ENCODE measurements at regions of chr19 and their contacts with region 1.

Region 1: DNA sequence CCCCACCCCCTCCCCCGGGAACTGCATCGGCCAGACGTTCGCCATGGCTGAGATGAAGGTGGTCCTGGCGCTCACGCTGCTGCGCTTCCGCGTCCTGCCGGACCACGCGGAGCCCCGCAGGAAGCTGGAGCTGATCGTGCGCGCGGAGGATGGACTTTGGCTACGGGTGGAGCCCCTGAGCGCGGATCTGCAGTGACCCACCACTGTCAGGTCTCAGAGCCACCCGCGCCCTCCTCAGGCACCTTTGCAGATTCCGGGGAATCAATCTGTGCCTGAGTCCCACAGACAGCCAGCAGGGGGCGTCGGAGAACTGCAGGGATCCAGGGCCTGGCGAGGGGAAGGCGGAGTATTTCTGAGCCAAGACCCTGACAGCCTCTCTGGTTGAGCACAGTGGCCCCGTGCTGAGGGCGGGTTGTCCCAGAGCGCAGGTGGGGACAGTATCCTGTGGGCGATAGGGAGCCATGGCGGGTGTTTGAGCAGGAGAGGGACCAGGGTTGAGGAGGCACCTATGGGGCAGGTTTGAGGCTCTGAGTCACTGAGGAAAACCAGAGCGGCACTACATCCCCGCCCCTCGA is 30.4 kb upstream of the CYP4F8 start:
- DNase-seq: peak; percentile 78 to 87
- ATAC-seq: peak; percentile 89 to 98 (median 89)
- H3K4me3 ChIP-seq: no peak overlapping the region
- H3K4me3 Mint-ChIP-seq: no peak overlapping the region
- H3K27ac ChIP-seq: no peak overlapping the region
- H3K27ac Mint-ChIP-seq: no peak overlapping the region
- H3K4me1 ChIP-seq: peaks cover 7% of the 10 kb centered on the region
- H3K4me1 Mint-ChIP-seq: peaks cover 6% of the 10 kb centered on the region in 2 donors
- H3K27me3 ChIP-seq: peaks cover 7% of the 10 kb centered on the region
- H3K27me3 Mint-ChIP-seq: peaks cover 15 to 26% of the 10 kb centered on the region in 2 donors
- CTCF ChIP-seq: peak; percentile 73

Region 2: GRCh38 chr19:15869109-15869555 is 284.5 kb after region 1 on chr19:
- intact Hi-C with region 1: loop called (anchors 1 kb)
- DNase-seq: peak in 1 of 2 donors; percentile 77
- ATAC-seq: peak; percentile 59 to 96 (median 66)
- H3K4me3 ChIP-seq: no peak overlapping the region
- H3K4me3 Mint-ChIP-seq: no peak overlapping the region
- H3K27ac ChIP-seq: no peak overlapping the region
- H3K27ac Mint-ChIP-seq: no peak overlapping the region
- H3K4me1 ChIP-seq: peaks cover 9% of the 10 kb centered on the region
- H3K4me1 Mint-ChIP-seq: peaks cover 5 to 7% of the 10 kb centered on the region in 2 donors
- H3K27me3 ChIP-seq: peaks cover 2% of the 10 kb centered on the region
- H3K27me3 Mint-ChIP-seq: peaks cover 10 to 14% of the 10 kb centered on the region in 2 donors
- CTCF ChIP-seq: peak; percentile 50

Measured in natural killer cell (primary cell).